Activated B cell treated with CpG ODN at 0.5 μM for 24 hours (primary cell): ENCODE measurements at regions of chr14 and their contacts with region 1.

Region 1: DNA sequence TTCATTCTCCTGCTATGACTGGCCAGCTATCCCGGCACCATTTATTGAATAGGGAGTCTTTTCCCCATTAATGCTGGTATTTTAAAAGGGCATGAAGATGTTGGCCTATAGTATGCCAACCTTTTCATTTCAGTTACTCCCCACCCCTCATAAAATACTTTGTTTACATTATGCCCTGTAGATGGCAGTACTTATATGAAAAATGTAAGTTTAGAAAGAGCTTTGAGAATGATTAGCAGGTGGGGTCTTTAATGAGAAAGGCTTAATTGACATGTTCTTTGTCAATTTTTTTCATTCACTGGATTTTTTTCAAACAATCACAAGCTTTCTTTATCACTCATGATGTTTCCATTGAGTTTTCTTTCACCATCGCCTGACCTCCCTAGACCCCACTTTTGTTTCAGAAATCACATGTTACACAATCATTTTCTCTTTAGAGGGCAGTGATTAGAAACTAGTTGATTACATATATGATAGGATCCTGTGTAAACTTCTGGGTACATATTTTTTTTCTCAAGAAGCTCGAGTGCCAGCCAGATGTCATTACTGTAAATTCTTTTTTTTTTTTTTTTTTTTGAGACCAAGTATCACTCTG is 62.6 kb upstream of the PSMA6 start:
- DNase-seq: no peak
- ATAC-seq: peak; percentile 65
- H3K4me3 Mint-ChIP-seq: no peak overlapping the region
- H3K27ac Mint-ChIP-seq: no peak overlapping the region
- H3K4me1 Mint-ChIP-seq: peaks cover 5% of the 10 kb centered on the region
- H3K27me3 Mint-ChIP-seq: no peaks in the 10 kb centered on the region
- CTCF ChIP-seq: no peak

Region 2: DNA sequence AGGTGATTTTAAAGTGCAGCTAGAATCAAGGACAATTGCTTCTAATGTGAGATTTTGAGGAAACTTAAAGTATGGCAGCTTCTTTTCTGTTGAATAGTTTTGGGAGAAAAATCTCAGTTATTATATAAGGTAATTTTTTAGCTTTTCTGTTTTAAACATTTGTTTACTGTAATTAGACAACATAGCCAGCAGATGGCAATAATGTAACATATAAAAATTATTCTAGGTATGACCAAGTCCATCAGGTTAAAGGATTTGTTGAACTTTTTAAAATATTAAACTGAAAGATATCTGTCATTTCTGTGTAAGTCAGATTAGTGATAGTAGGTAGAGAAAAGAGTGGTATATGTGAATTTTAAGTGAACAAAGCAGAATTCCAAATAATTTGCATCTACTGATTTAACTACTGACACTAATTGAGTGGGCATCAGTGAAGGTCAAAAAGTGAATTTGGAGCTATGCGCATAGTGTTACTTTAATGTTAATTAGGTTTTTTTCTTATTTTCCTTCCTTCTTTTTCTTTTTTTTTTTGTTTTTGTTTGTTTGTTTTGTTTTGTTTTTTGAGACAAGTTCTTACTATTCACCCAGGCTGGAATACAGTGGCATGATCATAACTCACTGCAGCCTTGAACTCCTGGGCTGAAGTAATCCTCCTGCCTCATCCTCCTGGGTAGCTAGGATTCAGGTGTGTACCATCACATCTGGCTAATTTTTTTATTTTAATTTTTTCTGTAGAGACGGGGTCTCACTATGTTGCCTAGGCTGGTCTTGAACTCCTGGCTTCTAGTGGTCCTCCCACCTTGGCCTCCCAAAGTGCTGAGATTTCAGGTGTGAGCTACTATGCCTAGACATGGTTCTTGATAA is 88.6 kb before region 1 on chr14:
- CTCF ChIA-PET with region 1: interaction called, 24 read pairs
- POLR2A ChIA-PET with region 1: no interaction called
- intact Hi-C with region 1: loop called (anchors 1 kb)
- DNase-seq: no peak
- ATAC-seq: no peak
- H3K4me3 Mint-ChIP-seq: no peak overlapping the region
- H3K27ac Mint-ChIP-seq: no peak overlapping the region
- H3K4me1 Mint-ChIP-seq: peaks cover 2% of the 10 kb centered on the region
- H3K27me3 Mint-ChIP-seq: no peaks in the 10 kb centered on the region
- CTCF ChIP-seq: peak; percentile 58

Region 3: DNA sequence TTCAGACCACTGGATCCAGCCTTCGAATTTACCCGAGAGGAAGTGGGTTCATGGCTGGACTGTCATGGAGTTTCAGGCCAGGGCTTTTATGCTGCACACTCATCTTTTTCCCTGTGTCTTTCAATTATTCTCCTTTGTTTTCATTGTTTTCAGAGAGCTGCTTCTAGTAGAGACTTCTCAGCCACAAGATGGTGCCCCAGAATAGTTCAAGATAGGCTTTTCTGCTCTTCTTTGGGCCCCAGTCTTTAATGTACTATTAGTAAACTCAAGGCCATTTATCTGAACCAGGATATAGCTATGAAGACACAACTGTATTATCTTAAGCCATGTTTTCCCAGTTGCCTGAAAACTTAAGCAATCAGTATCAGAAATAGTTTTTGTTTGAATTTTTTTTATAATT is 32.2 kb after region 1 on chr14:
- CTCF ChIA-PET with region 1: interaction called, 11 read pairs
- POLR2A ChIA-PET with region 1: no interaction called
- intact Hi-C with region 1: no loop called
- DNase-seq: no peak
- ATAC-seq: no peak
- H3K4me3 Mint-ChIP-seq: no peak overlapping the region
- H3K27ac Mint-ChIP-seq: no peak overlapping the region
- H3K4me1 Mint-ChIP-seq: no peaks in the 10 kb centered on the region
- H3K27me3 Mint-ChIP-seq: no peaks in the 10 kb centered on the region
- CTCF ChIP-seq: no peak